ENCODE measurements at regions of chr13 and their contacts with region 1.

Region 1: GRCh38 chr13:113208424-113209335 is at the start of gene PCID2:
- DNase-seq: peak; percentile 82 to 97
- H3K4me3 ChIP-seq: peak within 1 kb of the TSS; percentile 93
- CTCF ChIP-seq: no peak
- POLR2A ChIP-seq: no peak
- total RNA-seq, gene PCID2: 28.0 to 44.2 (median 40.3) TPM

Region 2: DNA sequence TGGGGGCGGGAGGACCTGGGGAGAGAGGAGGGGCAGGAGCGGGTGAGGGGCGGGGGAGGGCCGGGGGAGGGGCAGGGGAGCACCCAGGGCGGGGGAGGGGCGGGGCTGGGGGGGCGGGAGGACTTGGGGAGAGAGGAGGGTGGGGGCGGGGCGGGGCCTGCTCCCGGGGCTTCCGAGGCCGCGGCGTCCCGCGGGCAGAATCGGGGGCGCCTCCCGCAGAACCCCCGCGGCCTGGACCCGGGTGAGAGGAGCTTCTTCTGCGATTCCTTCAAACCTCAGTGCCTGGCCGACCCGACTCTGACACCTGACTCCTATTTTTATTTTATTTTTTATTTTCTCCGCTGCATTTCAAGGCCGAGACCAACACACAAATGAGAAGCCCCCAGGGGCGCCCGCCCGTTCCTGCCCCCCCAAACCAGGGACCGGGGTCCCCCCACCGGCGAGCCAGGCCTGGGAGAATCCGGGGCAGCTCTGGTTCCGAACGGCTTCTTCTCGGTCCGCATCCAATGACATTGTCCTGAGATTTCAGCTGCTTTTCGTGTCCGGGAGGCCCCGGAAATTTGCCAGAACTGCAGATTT is 155.7 kb after region 1 on chr13:
- intact Hi-C with region 1: loop called (anchors 10 kb)
- DNase-seq: peak in 1 of 2 donors; percentile 40
- H3K4me3 ChIP-seq: peak overlapping the region; percentile 29
- CTCF ChIP-seq: no peak
- POLR2A ChIP-seq: no peak

Measured in lower leg skin (tissue), 4 donors.